CD8-positive, alpha-beta memory T cell (primary cell): ENCODE measurements at regions of chr3 and their contacts with region 1.

Region 1: GRCh38 chr3:71087143-71088018 is 496.1 kb downstream of the FOXP1 start:
- DNase-seq: peak in 4 of 5 donors; percentile 16 to 83 (median 66)
- H3K4me3 ChIP-seq: peak overlapping the region; percentile 8
- H3K4me3 Mint-ChIP-seq: peak overlapping the region; percentile 3 to 82 (median 73)
- H3K27ac ChIP-seq: peak overlapping the region; percentile 19
- H3K27ac Mint-ChIP-seq: peak overlapping the region; percentile 61 to 96 (median 92)
- H3K4me1 ChIP-seq: peaks cover 68% of the 10 kb centered on the region
- H3K4me1 Mint-ChIP-seq: peaks cover 71 to 92% (median 86%) of the 10 kb centered on the region in 3 donors
- H3K27me3 ChIP-seq: no peaks in the 10 kb centered on the region
- H3K27me3 Mint-ChIP-seq: no peaks in the 10 kb centered on the region

Region 2: DNA sequence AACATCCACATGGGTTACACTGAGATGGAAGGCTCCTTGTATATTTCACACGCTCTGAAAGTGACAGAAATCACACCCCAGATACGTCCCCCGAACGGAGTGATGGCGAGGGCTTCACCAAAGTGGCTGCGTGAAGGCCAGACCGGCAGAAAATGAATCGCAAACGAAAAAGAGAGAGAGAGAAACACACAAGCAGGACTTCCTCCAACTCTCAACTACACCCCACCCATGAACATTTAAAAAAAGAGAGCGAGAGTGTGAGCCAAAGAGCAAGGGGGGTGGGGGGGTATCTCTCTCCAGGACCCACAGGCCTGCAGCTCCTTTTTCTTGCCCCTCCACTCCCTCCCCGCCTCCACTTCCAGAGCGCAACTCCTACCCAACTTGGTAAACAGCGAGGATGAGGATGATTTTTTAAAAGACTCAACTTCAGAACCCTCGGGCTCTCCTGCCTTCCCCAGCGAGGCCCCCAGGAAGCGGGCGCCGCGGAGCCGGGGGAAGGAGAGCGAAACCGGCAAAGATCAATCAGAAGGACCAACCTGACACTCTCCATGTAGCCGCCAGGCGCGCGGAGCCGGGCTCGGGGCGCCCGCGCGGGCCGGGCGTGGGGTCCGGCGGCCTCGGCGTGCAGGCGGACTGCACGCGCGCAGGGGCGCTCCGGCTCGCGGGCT is 23.0 kb before region 1 on chr3:
- CTCF ChIA-PET with region 1: interaction called, 15 read pairs
- POLR2A ChIA-PET with region 1: interaction called, 6 read pairs
- DNase-seq: peak; percentile 47 to 85 (median 77)
- H3K4me3 ChIP-seq: peak overlapping the region; percentile 95
- H3K4me3 Mint-ChIP-seq: no peak overlapping the region
- H3K27ac ChIP-seq: peak overlapping the region; percentile 82
- H3K27ac Mint-ChIP-seq: no peak overlapping the region
- H3K4me1 ChIP-seq: peaks cover 79% of the 10 kb centered on the region
- H3K4me1 Mint-ChIP-seq: peaks cover 38 to 72% (median 63%) of the 10 kb centered on the region in 3 donors
- H3K27me3 ChIP-seq: no peaks in the 10 kb centered on the region
- H3K27me3 Mint-ChIP-seq: no peaks in the 10 kb centered on the region

Region 3: DNA sequence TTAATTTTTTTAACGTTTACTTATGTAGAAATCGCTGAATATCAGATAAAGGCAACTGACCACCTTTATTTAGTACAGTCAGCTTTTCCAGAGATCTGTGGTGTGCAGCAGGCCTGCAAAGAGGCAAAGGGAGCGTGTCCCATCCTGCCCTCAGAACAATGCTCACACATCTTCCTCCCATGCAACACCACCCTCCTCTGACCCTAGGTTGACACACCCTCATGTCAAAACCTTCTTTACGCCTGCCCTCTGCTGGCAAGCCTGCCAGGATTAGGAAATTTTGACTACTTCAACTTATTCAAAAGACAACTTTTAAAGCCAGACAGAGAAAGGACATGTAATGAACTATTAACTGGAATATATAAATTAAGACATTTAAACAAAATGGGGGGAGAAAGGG is 17.6 kb before region 1 on chr3:
- CTCF ChIA-PET with region 1: interaction called, 15 read pairs
- POLR2A ChIA-PET with region 1: interaction called, 6 read pairs
- DNase-seq: peak; percentile 31 to 73 (median 46)
- H3K4me3 ChIP-seq: no peak overlapping the region
- H3K4me3 Mint-ChIP-seq: peak overlapping the region in 2 of 7 donors; percentile 61
- H3K27ac ChIP-seq: no peak overlapping the region
- H3K27ac Mint-ChIP-seq: peak overlapping the region in 7 of 8 donors; percentile 6 to 94 (median 61)
- H3K4me1 ChIP-seq: peaks cover 66% of the 10 kb centered on the region
- H3K4me1 Mint-ChIP-seq: peaks cover 66 to 84% (median 82%) of the 10 kb centered on the region in 3 donors
- H3K27me3 ChIP-seq: no peaks in the 10 kb centered on the region
- H3K27me3 Mint-ChIP-seq: no peaks in the 10 kb centered on the region

Region 4: DNA sequence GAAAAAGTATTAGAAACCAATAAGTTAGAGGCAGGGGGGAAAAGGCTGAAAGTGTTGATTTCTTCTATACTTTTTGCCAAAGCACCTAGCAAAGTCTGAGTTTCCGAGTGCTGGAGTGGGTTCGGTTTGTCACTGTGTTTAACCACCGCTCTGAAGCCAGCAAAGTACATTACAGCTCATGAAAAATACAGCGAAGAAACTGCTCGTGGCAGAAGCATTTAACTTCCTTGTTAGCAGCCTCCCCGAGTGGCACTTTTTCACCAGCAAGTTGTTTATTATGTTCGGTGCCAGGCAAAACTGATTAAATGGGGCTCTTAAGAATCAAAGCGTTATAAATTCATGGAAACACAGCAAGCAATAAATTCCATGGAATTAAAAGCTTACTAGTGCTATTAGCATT is 182.5 kb after region 1 on chr3:
- CTCF ChIA-PET with region 1: no interaction called
- POLR2A ChIA-PET with region 1: no interaction called
- DNase-seq: peak in 1 of 5 donors; percentile 42
- H3K4me3 ChIP-seq: no peak overlapping the region
- H3K4me3 Mint-ChIP-seq: no peak overlapping the region
- H3K27ac ChIP-seq: no peak overlapping the region
- H3K27ac Mint-ChIP-seq: no peak overlapping the region
- H3K4me1 ChIP-seq: peaks cover 36% of the 10 kb centered on the region
- H3K4me1 Mint-ChIP-seq: peaks cover 33 to 75% (median 67%) of the 10 kb centered on the region in 3 donors
- H3K27me3 ChIP-seq: no peaks in the 10 kb centered on the region
- H3K27me3 Mint-ChIP-seq: no peaks in the 10 kb centered on the region